Activated CD4-positive, alpha-beta memory T cell treated with anti-CD3 and anti-CD28 coated beads for 36 hours (primary cell): ENCODE measurements at regions of chr17 and their contacts with region 1.

Region 1: DNA sequence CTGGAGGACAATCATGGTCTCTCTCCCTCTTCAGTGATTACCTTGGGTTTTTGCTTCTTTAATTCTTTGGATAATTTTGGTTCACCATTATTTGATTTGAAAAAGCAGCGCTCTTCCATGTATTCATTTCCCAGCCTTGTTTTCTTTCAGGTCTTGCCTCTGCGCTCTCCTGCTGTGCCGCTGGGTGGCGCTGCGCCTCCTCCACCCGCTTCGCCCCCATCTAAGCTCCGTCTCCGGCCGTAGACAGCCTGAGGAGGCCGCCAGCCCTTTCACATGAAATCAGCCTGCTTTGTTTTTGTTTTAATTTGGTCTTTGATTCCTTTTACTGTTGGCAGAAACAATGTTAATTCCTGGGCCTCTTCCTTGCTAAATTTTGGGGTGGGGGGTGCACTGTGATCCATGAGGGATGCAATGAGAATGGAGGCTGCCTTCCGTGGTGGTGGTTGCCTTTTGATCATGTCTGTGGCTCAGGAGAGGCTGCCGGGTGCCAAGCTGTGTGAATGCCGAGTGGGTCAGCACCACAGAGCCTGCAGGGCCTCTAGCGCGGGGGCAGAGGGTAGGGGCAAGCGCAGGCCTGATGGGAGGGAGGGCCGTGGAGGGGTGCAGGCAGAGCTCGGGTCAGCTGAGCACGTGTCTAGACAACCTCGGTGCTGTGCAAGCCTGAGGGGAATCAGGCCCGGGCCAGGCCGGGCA is 64.1 kb downstream of the PLD6 start:
- DNase-seq: peak; percentile 72
- H3K4me3 Mint-ChIP-seq: no peak overlapping the region
- H3K27ac Mint-ChIP-seq: peak overlapping the region; percentile 10
- H3K4me1 Mint-ChIP-seq: peaks cover 18% of the 10 kb centered on the region
- H3K27me3 Mint-ChIP-seq: no peaks in the 10 kb centered on the region

Region 2: GRCh38 chr17:17001874-17002520 is 140.0 kb before region 1 on chr17:
- CTCF ChIA-PET with region 1: interaction called, 4 read pairs
- POLR2A ChIA-PET with region 1: no interaction called
- intact Hi-C with region 1: loop called (anchors 5 kb)
- DNase-seq: peak; percentile 81
- H3K4me3 Mint-ChIP-seq: no peak overlapping the region
- H3K27ac Mint-ChIP-seq: no peak overlapping the region
- H3K4me1 Mint-ChIP-seq: no peaks in the 10 kb centered on the region
- H3K27me3 Mint-ChIP-seq: no peaks in the 10 kb centered on the region

Region 3: GRCh38 chr17:17016199-17016866 is 125.7 kb before region 1 on chr17:
- CTCF ChIA-PET with region 1: no interaction called
- POLR2A ChIA-PET with region 1: no interaction called
- intact Hi-C with region 1: no loop called
- DNase-seq: no peak
- H3K4me3 Mint-ChIP-seq: no peak overlapping the region
- H3K27ac Mint-ChIP-seq: peak overlapping the region; percentile 38
- H3K4me1 Mint-ChIP-seq: peaks cover 35% of the 10 kb centered on the region
- H3K27me3 Mint-ChIP-seq: no peaks in the 10 kb centered on the region

Region 4: GRCh38 chr17:17125136-17126084 is 16.6 kb before region 1 on chr17:
- CTCF ChIA-PET with region 1: interaction called, 12 read pairs
- POLR2A ChIA-PET with region 1: no interaction called
- intact Hi-C with region 1: no loop called
- DNase-seq: peak; percentile 22
- H3K4me3 Mint-ChIP-seq: no peak overlapping the region
- H3K27ac Mint-ChIP-seq: peak overlapping the region; percentile 68
- H3K4me1 Mint-ChIP-seq: peaks cover 41% of the 10 kb centered on the region
- H3K27me3 Mint-ChIP-seq: no peaks in the 10 kb centered on the region

Region 5: DNA sequence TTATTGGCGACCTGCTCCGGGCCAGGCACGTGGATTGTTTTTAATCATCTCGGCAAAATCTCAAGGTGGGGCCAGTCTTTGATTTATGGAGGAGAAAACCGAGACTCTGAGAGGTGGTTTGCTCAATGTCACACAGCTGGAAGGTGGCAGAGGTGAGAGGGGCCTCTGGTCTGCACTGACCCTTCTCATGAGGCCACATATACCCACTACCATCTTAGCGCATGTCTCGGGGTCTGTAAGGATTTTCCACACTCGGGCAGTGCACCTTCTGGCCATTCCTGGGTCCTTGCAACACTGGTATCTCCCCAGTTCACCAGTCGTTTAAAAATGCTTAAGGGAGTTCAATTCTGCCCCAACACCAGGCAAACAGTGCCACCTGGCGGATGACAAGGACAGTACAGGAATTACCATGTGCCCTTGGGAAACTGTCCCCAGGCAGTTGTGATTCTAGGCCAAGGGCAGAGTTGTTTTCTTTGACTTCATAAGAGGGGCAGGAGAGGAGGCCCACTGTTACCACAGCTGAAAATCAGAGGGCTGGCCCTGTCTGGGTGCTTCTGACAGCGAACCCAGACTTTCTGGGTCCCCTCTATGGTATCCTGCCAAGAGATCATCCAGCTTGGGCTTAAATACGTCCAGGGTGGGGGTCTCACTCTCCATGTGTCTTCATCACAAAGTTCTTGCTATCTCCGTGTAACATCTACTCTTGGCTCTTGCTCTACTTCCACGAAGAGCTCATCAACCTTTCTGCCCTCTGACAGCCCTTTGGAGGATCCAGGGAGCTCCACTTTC is 499.8 kb after region 1 on chr17:
- CTCF ChIA-PET with region 1: no interaction called
- POLR2A ChIA-PET with region 1: no interaction called
- intact Hi-C with region 1: no loop called
- DNase-seq: peak; percentile 86
- H3K4me3 Mint-ChIP-seq: no peak overlapping the region
- H3K27ac Mint-ChIP-seq: no peak overlapping the region
- H3K4me1 Mint-ChIP-seq: no peaks in the 10 kb centered on the region
- H3K27me3 Mint-ChIP-seq: peaks cover 5% of the 10 kb centered on the region